ENCODE measurements at regions of chr5 and their contacts with region 1.

Region 1: GRCh38 chr5:42908509-42909488 is 97.1 kb upstream of the SELENOP start:
- DNase-seq: peak; percentile 87 to 94 (median 92)
- ATAC-seq: peak; percentile 91 to 95 (median 94)
- H3K4me3 ChIP-seq: peak overlapping the region in 11 of 12 donors; percentile 37 to 59 (median 57)
- H3K27ac ChIP-seq: peak overlapping the region in 1 of 12 donors; percentile 0
- H3K4me1 ChIP-seq: peaks cover 0 to 6% (median 1%) of the 10 kb centered on the region in 12 donors
- H3K27me3 ChIP-seq: peaks cover 0 to 6% (median 0%) of the 10 kb centered on the region in 9 donors
- CTCF ChIP-seq: peak; percentile 55 to 94 (median 82)
- POLR2A ChIP-seq: no peak

Region 2: DNA sequence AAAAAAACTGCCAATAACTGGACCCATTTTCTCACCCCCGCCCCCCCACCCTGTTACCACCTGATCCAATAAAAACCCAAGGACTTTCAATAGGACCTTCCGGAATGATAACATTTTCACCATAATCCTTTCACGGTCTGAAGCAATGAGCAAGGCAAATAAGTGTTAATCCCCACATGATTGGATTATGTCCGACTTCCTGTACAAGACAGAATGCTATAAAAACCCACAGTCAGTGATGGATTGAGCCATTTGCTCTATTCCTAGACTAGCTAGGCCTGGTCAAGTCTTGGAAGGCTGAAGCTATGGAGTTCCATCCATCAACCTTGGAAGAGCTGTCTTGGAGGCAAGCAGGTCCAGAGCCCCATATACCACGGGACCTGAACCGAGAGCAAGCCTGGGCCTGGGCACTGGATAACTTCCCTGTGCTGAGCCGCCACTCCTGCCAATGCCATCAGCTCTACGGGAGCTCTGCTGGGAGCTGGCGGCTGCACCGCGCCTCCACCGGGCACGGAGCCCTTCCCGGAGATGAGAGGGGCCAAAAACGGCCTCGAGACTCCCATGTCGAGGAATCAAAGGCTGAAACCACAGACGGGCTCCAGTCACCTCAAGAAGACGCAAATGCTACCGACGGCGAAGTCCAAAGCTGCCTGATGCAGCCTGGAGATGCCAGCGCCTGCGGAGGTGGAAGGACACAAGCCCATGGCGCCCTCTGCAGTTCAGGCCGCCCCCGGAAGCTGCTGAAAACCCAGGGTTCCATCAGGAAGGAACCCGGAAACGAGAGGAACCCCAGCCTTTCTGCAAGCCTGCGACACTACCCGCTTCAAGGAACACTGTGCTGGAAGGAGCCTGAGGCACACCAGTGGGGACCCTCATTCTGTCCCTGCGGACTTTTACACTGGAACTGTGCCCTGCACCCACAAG is 62.1 kb after region 1 on chr5:
- intact Hi-C with region 1: loop called in 1 of 10 experiments (anchors 10 kb)
- DNase-seq: peak in 2 of 5 donors; percentile 27 to 71
- ATAC-seq: no peak
- H3K4me3 ChIP-seq: no peak overlapping the region
- H3K27ac ChIP-seq: no peak overlapping the region
- H3K4me1 ChIP-seq: no peaks in the 10 kb centered on the region
- H3K27me3 ChIP-seq: peaks cover 0 to 8% (median 0%) of the 10 kb centered on the region in 9 donors
- CTCF ChIP-seq: peak in 7 of 12 donors; percentile 6 to 36 (median 29)
- POLR2A ChIP-seq: no peak

Region 3: DNA sequence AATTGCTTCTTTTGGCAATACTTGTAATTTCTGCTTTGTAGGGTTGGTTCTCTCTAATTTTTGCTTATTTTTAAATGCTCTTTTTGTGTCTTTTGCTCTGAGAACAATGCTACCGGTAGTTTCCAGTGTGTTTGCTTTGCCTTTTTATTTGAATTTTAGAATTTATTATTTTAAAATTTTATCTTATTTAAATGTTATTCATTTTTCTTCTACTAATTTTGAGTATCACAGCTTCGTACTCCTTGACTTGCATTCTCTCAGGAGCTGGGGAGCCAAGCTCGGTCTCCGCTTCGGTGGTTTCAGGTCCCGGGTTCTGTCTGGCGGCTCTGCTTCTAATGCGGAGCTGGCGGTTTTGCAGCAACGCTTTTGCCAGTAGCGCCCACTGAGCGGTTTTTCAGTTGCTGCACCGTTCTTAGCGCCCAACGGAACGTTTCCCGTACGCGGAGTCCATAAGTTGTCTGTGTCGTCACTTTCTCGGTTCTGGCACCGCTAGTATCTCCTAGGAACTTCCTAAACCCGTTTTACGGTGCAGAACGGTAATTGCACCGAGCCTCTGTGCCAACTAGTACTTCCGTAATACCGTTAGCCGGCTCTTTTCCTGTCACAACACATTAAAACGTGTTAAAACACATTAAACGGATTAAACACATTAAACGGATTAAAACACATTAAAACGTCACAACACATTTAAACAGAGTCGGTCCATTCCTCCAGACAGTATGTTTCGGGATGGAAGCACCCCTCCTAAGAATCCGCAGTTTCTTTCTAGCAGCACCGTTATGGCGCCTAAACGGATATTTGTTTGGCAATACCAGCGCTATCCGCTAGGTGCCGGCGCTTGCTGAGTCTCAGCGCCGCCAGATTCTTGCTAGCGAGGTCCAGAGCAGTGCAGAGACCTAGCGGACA is 85.7 kb after region 1 on chr5:
- intact Hi-C with region 1: loop called in 4 of 10 experiments (anchors 5 to 10 kb)
- DNase-seq: peak; percentile 88 to 92 (median 89)
- ATAC-seq: peak; percentile 62 to 85 (median 78)
- H3K4me3 ChIP-seq: peak overlapping the region; percentile 6 to 77 (median 68)
- H3K27ac ChIP-seq: peak overlapping the region; percentile 86 to 99 (median 96)
- H3K4me1 ChIP-seq: peaks cover 0 to 31% (median 13%) of the 10 kb centered on the region in 12 donors
- H3K27me3 ChIP-seq: peaks cover 14 to 97% (median 63%) of the 10 kb centered on the region in 9 donors
- CTCF ChIP-seq: peak; percentile 71 to 90 (median 84)
- POLR2A ChIP-seq: no peak

Region 4: DNA sequence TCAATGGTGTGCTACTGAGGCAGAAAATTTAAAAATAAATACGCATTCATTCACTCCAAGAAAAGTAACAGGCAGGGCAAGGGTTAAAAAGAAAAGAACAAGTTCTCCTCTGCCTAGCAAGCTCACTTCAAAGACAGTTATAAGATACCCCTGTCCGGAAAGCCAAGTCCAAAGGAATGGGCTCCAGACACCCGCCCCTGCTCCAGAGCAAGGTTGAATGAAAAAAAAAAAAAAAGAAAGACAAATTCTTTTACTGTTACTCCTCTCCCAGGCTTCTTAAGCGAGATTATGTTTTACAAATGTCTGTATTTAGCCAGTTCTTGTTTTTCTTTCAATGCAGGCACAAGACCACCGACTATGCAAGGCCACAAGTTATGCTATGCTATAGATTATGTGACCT is 140.4 kb after region 1 on chr5:
- intact Hi-C with region 1: loop called in 5 of 10 experiments (anchors 5 kb)
- DNase-seq: no peak
- ATAC-seq: no peak
- H3K4me3 ChIP-seq: no peak overlapping the region
- H3K27ac ChIP-seq: no peak overlapping the region
- H3K4me1 ChIP-seq: peaks cover 0 to 5% (median 0%) of the 10 kb centered on the region in 12 donors
- H3K27me3 ChIP-seq: peaks cover 0 to 10% (median 0%) of the 10 kb centered on the region in 9 donors
- CTCF ChIP-seq: no peak
- POLR2A ChIP-seq: no peak

Region 5: DNA sequence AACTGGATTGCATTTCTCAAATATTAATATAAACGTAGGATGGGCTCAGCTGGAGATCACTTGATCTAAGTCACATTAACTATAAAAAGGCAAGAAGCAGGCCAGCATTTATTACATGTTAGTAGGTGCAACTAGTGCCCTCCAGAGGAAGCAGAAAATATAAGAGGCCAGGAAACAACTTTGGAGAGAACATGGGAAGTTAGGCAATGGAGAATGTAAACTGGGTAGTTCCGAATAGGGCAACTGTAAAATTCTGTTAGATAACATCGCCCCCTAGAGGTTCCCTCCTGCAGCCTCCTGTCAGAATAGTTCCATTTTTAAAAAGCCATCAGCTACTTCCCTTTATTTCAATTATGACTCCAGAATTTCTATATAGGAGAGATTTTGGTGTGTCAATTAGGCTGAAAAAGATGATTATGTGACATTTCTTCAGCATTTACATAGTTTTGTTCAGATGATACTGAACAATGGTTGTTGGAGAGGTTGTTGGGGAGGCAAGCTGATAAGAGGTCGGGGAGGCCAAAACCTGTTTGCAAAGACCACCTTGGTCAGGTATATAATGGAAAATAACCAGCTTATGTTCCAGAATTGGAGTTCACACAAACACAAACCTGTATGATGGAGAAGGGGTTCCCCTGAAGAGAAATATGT is 481.0 kb after region 1 on chr5:
- intact Hi-C with region 1: loop called in 2 of 10 experiments (anchors 5 kb)
- DNase-seq: peak in 2 of 5 donors; percentile 31 to 44
- ATAC-seq: peak in 3 of 4 donors; percentile 86 to 92 (median 92)
- H3K4me3 ChIP-seq: no peak overlapping the region
- H3K27ac ChIP-seq: no peak overlapping the region
- H3K4me1 ChIP-seq: peaks cover 0 to 4% (median 0%) of the 10 kb centered on the region in 12 donors
- H3K27me3 ChIP-seq: peaks cover 0 to 2% (median 0%) of the 10 kb centered on the region in 9 donors
- CTCF ChIP-seq: peak; percentile 70 to 89 (median 80)
- POLR2A ChIP-seq: no peak

Measured in heart left ventricle (tissue), 16 donors.